ENCODE measurements at regions of chr1 and their contacts with region 1.

Region 1: GRCh38 chr1:10494754-10495474 is 20.2 kb downstream of the PEX14 start:
- DNase-seq: no peak
- H3K4me3 ChIP-seq: peak overlapping the region; percentile 46
- CTCF ChIP-seq: peak; percentile 92

Region 2: DNA sequence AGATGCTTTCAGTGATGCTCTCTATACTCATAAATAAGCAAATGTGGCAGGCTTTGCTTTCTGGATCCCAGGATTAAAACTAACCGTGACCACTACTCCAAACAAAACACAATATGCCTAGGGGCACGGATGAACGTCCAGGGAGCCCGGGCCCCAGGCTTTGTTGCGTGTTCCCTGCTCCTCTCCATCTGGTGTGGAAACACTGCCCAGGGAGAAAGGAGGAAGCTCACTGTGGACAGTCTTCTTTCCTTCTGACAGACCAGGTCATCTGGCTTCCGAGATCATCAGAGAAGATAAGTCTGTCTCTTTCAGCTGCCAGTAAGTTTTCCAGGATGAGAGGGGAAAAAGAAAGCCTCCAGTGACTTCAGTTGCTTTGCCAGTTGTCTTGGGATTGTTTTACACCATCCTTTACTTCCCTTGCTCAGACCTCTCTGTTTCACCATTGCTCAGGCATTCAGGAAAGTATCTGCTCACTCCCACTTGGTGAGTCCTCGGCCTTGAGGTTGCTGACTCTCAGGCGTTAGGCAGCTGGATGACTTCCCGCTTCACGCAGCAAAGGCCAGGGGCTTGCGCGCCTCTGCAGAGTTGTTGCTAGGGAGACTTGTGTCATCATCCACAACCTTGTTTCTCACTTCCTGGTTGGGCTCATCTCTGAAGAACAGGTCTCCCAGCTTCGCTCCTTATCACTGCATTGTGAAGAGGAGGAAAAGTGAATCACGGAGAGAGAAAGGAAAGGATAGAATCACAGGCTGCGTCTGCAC is 116.7 kb before region 1 on chr1:
- CTCF ChIA-PET with region 1: interaction called, 38 read pairs
- POLR2A ChIA-PET with region 1: no interaction called
- DNase-seq: peak; percentile 63
- H3K4me3 ChIP-seq: no peak overlapping the region
- CTCF ChIP-seq: no peak

Region 3: GRCh38 chr1:10438677-10439163 is 56.2 kb before region 1 on chr1:
- CTCF ChIA-PET with region 1: interaction called, 332 read pairs
- POLR2A ChIA-PET with region 1: no interaction called
- DNase-seq: no peak
- H3K4me3 ChIP-seq: no peak overlapping the region
- CTCF ChIP-seq: no peak

Region 4: GRCh38 chr1:10451287-10451686 is 43.6 kb before region 1 on chr1:
- CTCF ChIA-PET with region 1: interaction called, 25 read pairs
- POLR2A ChIA-PET with region 1: interaction called, 3 read pairs
- DNase-seq: no peak
- H3K4me3 ChIP-seq: peak overlapping the region; percentile 42
- CTCF ChIP-seq: no peak

Region 5: GRCh38 chr1:10479296-10479695 is 15.6 kb before region 1 on chr1:
- CTCF ChIA-PET with region 1: interaction called, 69 read pairs
- POLR2A ChIA-PET with region 1: no interaction called
- DNase-seq: no peak
- H3K4me3 ChIP-seq: no peak overlapping the region
- CTCF ChIP-seq: no peak

Region 6: DNA sequence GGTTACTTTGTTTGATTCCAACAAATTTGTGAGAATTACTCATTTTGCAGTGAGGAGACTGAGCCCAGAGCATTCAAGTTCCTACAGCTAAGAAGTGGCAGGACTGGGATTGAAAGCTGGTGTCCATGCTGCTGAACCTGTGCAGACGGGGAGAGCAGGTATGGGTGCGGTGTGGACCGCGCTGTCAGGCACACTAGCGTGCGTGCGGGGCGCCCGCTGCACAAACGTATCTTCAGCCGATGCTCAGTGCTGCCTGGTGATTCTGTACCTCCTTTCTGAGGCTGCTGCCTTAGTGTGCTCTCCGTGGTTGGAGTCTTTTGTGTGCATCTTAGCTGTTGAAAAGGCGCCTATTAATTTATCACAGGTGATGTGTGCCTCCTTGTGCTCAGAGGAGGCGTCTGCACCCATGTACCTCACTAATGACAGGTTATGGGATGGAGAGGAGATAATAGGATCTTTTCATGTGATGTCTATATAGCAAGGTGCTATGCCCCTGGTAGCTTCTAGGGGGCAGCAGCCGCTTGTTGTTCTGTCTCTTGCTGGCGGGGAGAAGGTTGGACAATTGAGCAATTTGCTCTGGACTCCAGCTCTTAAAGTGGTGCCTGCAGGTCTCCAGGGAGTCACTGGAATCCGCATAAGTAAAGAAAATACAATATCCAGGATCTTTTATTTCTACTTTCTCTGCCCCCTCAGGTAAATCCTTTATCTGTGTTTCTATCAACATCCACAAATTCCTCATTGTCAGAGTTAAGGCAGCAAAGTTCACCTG is 12.4 kb after region 1 on chr1:
- CTCF ChIA-PET with region 1: interaction called, 230 read pairs
- POLR2A ChIA-PET with region 1: interaction called, 4 read pairs
- DNase-seq: peak; percentile 42
- H3K4me3 ChIP-seq: no peak overlapping the region
- CTCF ChIP-seq: peak; percentile 82

Region 7: DNA sequence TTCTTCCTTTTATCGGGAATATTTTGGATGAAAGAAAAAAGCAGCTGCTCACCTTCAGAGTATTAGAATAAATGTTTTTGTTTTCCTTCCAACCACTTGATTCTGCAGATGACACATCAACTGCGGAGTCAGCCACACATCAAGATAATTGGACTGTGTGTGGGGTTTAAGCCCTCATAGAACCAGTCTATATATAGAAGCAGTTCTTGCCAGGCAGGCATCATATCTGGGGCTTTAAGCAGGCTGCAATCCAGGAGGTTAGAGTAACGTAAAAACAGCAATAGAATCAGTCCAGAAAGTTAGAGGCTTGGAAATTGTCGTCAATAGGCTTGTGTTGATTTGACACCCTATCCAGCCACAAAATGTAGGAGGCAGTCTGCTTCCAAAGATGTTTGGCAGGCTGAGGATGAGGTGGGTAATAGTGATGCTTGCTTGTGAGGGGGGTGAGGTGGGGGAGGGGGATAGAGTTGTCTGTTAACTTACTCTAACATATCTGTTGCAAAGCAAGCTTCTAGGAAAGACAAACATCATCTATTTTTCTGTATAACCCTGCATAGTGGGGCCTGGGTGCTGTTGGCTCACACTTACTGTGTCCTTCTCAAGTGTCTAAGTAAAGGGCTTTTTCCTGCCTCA is 44.6 kb after region 1 on chr1:
- CTCF ChIA-PET with region 1: no interaction called
- POLR2A ChIA-PET with region 1: no interaction called
- DNase-seq: no peak
- H3K4me3 ChIP-seq: no peak overlapping the region; the same call in 1 of the 2 replicates
- CTCF ChIP-seq: no peak

Region 8: GRCh38 chr1:10625554-10625953 is 130.6 kb after region 1 on chr1:
- CTCF ChIA-PET with region 1: no interaction called
- POLR2A ChIA-PET with region 1: no interaction called
- DNase-seq: no peak
- H3K4me3 ChIP-seq: no peak overlapping the region
- CTCF ChIP-seq: no peak

Region 9: DNA sequence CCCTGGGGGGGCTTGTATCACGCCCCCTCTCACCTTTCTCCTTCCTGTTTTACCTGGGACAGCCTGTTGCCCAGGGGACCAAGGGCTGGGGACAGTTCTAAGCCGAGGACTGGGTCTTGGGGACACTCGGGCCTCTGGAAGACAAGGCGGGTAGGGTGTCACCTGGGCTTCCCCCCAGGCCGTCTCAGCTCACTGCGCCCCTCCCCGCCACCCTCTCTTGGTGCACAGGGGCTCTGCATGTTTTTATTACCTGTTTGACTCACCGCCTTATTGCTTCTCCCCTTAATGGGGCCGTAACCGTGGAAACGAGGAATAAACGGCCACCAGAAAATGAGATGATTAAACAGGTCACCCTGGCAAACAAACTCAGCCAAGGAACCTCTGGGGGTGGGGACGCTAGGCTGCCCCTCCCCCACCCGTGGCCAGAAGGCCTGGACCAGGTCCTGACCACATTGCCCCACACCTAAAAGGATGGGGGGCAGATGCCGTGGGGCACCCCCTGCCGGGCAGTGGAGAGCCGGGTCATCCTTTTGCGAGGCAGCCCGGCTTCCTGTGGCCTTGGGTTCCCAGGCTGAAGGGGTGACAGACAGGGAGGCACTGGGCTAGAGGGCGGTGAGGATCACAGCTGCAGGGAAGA is 191.6 kb after region 1 on chr1:
- CTCF ChIA-PET with region 1: no interaction called
- POLR2A ChIA-PET with region 1: no interaction called
- DNase-seq: no peak
- H3K4me3 ChIP-seq: no peak overlapping the region
- CTCF ChIP-seq: no peak

Region 10: GRCh38 chr1:10696977-10697376 is 202.1 kb after region 1 on chr1:
- CTCF ChIA-PET with region 1: no interaction called
- POLR2A ChIA-PET with region 1: no interaction called
- DNase-seq: no peak
- H3K4me3 ChIP-seq: no peak overlapping the region
- CTCF ChIP-seq: no peak

Region 11: GRCh38 chr1:10867138-10867721 is 372.3 kb after region 1 on chr1:
- CTCF ChIA-PET with region 1: interaction called, 38 read pairs
- POLR2A ChIA-PET with region 1: no interaction called
- DNase-seq: no peak
- H3K4me3 ChIP-seq: peak overlapping the region; percentile 55
- CTCF ChIP-seq: peak; percentile 34